ENCODE measurements at regions of chr2 and their contacts with region 1.

Region 1: DNA sequence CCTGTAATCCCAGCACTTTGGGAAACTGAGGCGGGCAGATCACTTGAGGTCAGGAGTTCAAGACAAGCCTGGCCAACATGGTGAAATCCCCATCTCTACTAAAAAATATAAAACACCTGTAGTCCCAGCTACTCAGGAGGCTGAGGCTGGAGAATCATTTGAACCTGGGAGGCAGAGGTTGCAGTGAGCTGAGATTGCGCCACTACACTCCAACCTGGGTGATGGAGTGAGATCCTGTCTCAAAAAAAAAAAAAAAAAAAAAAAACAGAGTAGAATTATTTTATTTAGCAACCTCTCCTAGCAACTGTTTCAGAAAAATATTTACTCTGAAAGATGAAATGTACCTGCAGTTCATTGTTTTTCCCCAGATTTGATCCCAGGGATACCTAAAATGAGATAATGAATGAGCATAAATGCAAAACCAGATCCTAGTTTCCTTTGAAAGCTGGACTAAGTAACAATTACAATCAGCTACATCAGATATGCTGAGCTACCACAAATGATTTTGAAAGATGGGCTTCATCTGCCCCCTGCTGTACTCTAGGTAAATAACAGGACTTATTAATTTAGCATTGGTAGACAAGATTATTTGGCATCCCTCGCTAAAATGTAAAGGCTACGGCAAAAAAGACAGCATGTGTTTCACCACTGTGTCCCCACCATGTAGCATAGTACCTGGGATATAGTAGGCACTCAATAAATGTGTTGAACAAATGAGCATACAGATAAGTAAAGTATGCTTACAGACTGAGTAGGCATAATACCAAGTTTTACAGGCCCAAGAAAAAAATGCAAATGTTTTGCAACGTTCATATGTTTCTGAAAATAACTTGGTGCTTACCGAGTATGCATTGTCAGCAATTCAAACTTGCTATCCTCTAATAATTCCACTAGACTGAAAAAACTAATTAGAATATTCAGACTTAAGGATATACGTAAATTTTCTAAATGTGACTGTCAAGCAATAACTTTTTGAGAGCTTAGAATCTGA is 102.5 kb downstream of the ATL2 start:
- DNase-seq: peak; percentile 53
- H3K4me3 Mint-ChIP-seq: no peak overlapping the region
- H3K27ac Mint-ChIP-seq: no peak overlapping the region
- H3K4me1 Mint-ChIP-seq: peaks cover 2% of the 10 kb centered on the region
- H3K27me3 Mint-ChIP-seq: no peaks in the 10 kb centered on the region

Region 2: DNA sequence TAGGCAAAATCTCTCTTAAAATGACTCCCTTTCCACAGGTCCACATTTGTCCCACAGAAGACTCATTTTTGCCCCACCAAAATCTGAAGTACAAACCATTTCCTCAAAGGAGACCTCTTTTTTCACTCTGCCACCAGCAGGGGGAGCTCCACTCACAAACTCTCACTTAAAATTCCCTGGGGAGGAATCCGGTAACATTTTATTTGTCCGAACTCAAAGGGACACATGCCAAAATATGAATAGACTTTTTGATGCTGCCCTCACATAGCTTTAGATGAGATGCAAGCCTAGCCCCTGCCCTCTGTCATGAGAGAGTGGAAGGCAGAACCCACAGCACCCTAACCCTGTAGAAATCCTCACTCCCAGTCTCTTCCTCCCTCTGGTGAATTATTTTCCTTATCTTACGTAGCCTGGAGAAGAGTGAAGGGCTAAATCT is 292.4 kb before region 1 on chr2:
- CTCF ChIA-PET with region 1: interaction called, 3 read pairs
- intact Hi-C with region 1: loop called (anchors 1 kb)
- DNase-seq: peak; percentile 73
- H3K4me3 Mint-ChIP-seq: no peak overlapping the region
- H3K27ac Mint-ChIP-seq: no peak overlapping the region
- H3K4me1 Mint-ChIP-seq: peaks cover 6% of the 10 kb centered on the region
- H3K27me3 Mint-ChIP-seq: no peaks in the 10 kb centered on the region